Activated CD4-positive, alpha-beta T cell treated with anti-CD3 and anti-CD28 coated beads, Interleukin-2, amount 10 ng/mL, durations not matched to agents 24 days and 14 days (primary cell): ENCODE measurements at regions of chr17 and their contacts with region 1.

Region 1: GRCh38 chr17:28371245-28372202 is at the start of gene SARM1:
- DNase-seq: peak; percentile 96
- H3K4me3 Mint-ChIP-seq: peak within 1 kb of the TSS; percentile 85
- H3K27ac Mint-ChIP-seq: peak within 1 kb of the TSS; percentile 91
- H3K4me1 Mint-ChIP-seq: peaks cover 21% of the 10 kb centered on the region
- H3K27me3 Mint-ChIP-seq: no peaks in the 10 kb centered on the region
- total RNA-seq, gene SARM1: 36.4 and 37.7 TPM in 2 replicates

Region 2: DNA sequence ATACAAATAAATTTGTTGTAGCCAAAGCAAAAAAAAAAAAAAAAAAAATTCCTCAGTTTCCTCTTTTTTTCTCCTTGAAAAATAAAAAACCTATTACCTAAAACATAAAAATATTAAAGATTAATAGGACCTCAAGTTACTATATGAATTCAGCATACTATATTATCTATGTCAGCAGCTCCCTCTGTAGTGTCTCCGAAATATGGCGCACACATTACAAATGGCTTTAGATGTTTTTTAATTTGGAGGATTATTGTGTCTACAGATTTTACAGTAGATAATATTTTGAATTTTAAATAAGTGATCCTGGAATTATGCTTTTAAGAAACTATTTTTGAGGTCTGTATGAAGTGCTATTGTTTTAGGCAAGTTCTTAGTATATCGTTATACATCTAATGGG is 234.6 kb before region 1 on chr17:
- intact Hi-C with region 1: no loop called
- DNase-seq: no peak
- H3K4me3 Mint-ChIP-seq: no peak overlapping the region
- H3K27ac Mint-ChIP-seq: no peak overlapping the region
- H3K4me1 Mint-ChIP-seq: peaks cover 2% of the 10 kb centered on the region
- H3K27me3 Mint-ChIP-seq: no peaks in the 10 kb centered on the region

Region 3: GRCh38 chr17:28357061-28357900 is 14.2 kb before region 1 on chr17 and contains the start of gene POLDIP2:
- intact Hi-C with region 1: loop called (anchors 1 kb)
- DNase-seq: peak; percentile 99
- H3K4me3 Mint-ChIP-seq: peak within 1 kb of the TSS; percentile 90
- H3K27ac Mint-ChIP-seq: peak within 1 kb of the TSS; percentile 93
- H3K4me1 Mint-ChIP-seq: peaks cover 19% of the 10 kb centered on the region
- H3K27me3 Mint-ChIP-seq: no peaks in the 10 kb centered on the region
- total RNA-seq, gene POLDIP2: 112 and 115 TPM in 2 replicates

Region 4: DNA sequence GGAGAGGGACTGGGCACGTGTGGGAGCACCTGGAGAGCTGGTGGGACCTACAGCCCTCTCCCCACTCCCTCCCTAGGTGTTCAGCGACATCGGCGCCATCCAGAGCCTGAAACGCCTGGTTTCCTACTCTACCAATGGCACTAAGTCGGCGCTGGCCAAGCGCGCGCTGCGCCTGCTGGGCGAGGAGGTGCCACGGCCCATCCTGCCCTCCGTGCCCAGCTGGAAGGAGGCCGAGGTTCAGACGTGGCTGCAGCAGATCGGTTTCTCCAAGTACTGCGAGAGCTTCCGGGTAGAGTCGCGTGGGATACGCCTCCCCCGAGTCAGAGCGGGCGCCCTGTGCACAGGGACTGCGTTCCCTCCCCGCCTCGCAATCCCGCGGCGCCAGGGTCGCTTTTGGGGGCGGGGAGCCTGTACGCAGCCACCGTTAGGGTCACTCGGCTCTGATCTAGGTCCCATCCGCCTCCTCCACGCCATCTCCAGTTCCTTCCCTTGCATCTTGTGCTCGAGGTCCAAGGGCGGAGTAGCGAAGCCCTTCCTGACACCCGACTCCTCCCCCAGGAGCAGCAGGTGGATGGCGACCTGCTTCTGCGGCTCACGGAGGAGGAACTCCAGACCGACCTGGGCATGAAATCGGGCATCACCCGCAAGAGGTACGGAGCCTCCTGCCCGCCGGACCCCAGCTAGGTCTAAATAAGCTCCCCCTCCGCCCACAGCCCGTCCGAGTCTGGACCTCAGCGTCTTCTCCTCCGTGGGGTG is 12.9 kb after region 1 on chr17:
- intact Hi-C with region 1: loop called (anchors 1 kb)
- DNase-seq: peak; percentile 91
- H3K4me3 Mint-ChIP-seq: peak overlapping the region; percentile 93
- H3K27ac Mint-ChIP-seq: peak overlapping the region; percentile 86
- H3K4me1 Mint-ChIP-seq: peaks cover 23% of the 10 kb centered on the region
- H3K27me3 Mint-ChIP-seq: peaks cover 8% of the 10 kb centered on the region